Activated T-helper 1 cell treated with anti-CD3 and anti-CD28 coated beads, Interleukin-12 subunit alpha, Interleukin-12 subunit beta, Interleukin-2, Interleukin-4 antibody, amounts not matched to agents 30 ng/mL and 10 ng/mL and 1 ng/mL, durations not matched to agents 14 hours and 24 hours and 36 hours (primary cell): ENCODE measurements at regions of chr21 and their contacts with region 1.

Region 1: DNA sequence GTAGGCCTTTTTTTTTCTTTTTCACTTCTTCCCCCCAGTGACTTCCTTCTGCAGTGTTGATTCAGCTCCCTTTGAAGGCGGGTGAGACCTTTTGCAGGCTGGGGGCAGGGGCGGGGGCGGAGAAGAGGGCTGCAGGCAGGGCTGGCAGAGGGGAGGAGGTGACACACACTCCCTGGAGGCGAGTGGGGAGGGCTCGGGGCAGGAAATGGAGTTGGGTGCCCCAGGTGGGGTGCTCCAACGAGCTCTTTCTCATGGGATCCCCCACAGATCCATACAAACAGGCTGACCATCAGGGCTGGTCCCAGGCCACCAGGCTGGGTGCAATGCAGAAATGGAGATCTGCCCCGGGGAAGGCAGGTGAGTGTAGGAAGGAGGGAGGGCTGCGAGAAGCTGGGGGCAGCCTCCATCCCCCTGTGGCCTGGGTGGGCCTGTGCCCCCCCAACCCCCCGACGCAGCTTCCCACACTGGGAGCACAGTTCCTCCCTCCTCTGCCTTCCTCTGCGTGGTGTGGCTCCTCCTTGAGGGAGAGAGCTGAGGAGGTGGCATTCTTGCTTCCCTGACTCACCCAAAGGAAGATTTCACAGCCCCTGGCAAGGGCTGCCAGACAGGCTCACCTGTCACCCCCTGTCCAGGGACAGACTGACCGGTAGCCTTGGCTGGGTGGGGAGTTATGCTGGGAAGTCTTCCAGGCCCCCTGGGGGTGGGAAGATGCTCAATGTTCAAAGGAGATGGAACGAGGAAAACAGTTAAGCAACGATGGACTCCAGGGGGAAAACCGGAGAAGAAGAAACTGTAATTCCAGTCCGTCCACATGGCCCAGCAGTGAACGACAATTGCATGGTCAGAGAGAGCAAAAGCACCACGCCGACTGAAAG is 7.1 kb upstream of the ITGB2 start:
- DNase-seq: peak; percentile 68
- H3K4me3 Mint-ChIP-seq: peak overlapping the region; percentile 88
- H3K27ac Mint-ChIP-seq: peak overlapping the region; percentile 98
- H3K4me1 Mint-ChIP-seq: peaks cover 83% of the 10 kb centered on the region
- H3K27me3 Mint-ChIP-seq: no peaks in the 10 kb centered on the region

Region 2: DNA sequence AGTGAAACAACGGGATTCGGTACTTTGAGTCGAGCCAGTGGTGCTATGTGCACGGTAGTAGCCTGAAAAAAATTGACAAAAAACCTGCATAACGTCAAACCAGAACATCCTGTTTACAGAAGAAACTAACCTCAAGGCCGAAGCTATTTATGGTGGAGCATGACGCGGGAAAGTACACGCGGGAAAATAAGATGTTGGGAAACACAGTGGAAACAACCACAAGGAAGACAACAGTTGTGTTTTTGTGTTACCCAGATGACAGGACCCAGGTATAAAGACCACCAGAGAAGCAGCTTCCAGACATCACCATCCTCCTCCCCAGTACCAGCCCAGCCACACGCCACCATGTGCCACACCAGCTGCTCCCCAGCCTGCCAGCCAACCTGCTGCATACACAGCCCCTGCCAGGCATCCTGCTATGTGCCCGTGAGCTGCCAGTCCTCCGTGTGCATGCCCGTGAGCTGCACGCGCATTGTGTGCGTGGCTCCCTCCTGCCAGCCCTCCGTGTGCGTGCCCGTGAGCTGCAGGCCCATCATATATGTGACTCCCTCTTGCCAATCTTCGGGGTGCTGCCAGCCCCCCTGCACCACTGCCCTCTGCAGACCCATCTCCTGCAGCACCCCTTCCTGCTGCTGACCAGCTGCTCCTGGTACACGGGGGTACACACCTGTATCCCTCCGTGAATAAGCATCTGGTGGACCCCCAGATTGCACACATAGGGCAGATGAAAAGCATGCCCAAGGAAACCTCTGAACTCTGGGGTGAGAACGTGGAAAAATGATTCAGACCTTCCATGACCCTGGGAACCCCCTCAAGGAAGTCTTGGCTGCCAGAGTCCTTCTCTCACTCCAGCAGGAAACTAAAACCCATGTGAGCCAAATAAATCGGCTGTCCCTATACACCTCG is 269.9 kb before region 1 on chr21 and contains the start of gene KRTAP12-3:
- intact Hi-C with region 1: loop called (anchors 5 kb)
- DNase-seq: peak; percentile 52
- H3K4me3 Mint-ChIP-seq: peak within 1 kb of the TSS; percentile 47
- H3K27ac Mint-ChIP-seq: peak within 1 kb of the TSS; percentile 95
- H3K4me1 Mint-ChIP-seq: peaks cover 63% of the 10 kb centered on the region
- H3K27me3 Mint-ChIP-seq: peaks cover 6% of the 10 kb centered on the region
- total RNA-seq, gene KRTAP12-3: not detected in 2 replicates

Region 3: GRCh38 chr21:44817506-44817880 is 110.3 kb before region 1 on chr21:
- intact Hi-C with region 1: loop called (anchors 2 kb)
- DNase-seq: peak; percentile 92
- H3K4me3 Mint-ChIP-seq: peak overlapping the region; percentile 66
- H3K27ac Mint-ChIP-seq: no peak overlapping the region
- H3K4me1 Mint-ChIP-seq: peaks cover 11% of the 10 kb centered on the region
- H3K27me3 Mint-ChIP-seq: no peaks in the 10 kb centered on the region

Region 4: DNA sequence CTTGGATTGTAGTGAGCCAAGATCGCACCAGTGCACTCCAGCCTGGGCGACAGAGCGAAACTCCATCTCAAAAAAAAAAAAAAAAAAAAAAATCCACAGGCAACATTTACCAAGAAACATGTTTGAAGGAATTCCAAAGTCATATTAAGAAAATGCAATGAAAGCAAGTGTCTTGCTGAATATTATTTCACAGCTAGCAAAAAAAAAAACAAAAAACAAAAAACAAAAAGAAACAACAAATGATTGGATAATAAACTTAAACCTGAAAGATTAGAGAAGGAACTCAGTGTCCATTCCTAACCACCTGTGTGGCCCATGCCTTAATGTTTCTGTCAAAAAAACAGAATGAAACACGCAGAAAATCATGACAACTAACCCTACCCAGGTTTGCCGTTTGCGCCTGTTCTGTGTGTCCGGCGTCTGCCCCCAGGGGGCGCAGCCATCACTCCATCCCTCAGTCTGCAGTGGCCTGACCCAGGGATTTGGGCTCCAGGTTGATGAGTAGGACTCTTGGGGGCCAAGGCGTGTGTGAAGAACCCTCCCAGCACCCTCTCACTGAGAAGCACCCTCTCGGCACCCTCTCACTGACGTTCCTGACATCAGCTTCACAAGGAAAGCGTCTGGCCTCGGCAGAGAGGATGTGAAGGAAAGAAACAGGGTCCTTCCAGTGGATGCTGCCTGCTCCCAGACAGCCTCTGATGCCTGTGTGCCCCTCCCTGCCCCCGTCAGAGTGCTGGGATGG is 35.1 kb before region 1 on chr21:
- intact Hi-C with region 1: loop called (anchors 1 kb)
- DNase-seq: peak; percentile 68
- H3K4me3 Mint-ChIP-seq: no peak overlapping the region
- H3K27ac Mint-ChIP-seq: peak overlapping the region; percentile 35
- H3K4me1 Mint-ChIP-seq: peaks cover 7% of the 10 kb centered on the region
- H3K27me3 Mint-ChIP-seq: no peaks in the 10 kb centered on the region

Region 5: DNA sequence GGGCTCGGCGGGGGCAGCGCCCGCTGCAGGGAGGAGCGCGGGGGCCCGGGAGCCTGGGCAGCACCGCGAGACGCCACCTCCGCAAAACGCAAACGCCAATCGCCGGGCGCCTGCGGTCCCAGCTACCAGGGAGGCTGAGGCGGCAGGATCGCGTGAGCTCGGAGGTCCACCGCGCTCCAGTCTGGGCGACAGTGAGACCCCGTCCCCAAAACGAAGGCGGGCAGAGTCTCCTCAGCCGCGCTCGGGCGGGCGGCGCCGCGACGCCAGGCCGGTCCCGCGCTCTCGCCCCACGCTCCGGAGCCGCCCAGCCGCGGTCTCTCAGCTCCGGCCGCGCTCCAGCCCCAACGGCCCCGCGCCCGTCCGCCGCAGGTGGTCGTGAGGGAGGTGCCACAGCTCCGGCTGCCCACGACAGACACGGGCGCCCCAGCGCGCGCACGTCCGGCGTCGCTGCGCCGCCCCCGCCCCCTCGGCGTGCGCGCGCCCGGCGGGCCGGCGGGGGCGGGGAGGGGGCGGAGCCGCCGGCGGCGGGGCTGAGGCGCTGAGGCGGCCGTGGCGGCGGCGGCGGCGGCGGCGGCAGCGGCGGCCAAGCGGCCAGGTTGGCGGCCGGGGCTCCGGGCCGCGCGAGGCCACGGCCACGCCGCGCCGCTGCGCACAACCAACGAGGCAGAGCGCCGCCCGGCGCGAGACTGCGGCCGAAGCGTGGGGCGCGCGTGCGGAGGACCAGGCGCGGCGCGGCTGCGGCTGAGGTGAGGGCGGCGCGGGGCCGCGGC is 146.4 kb after region 1 on chr21 and contains the start of gene ADARB1:
- intact Hi-C with region 1: loop called (anchors 5 kb)
- DNase-seq: peak; percentile 63
- H3K4me3 Mint-ChIP-seq: peak within 1 kb of the TSS; percentile 96
- H3K27ac Mint-ChIP-seq: peak within 1 kb of the TSS; percentile 98
- H3K4me1 Mint-ChIP-seq: peaks cover 42% of the 10 kb centered on the region
- H3K27me3 Mint-ChIP-seq: no peaks in the 10 kb centered on the region
- total RNA-seq, gene ADARB1: 24.8 and 25.9 TPM in 2 replicates